Activated B cell treated with CpG ODN at 0.5 μM for 24 hours (primary cell): ENCODE measurements at regions of chr15 and their contacts with region 1.

Region 1: GRCh38 chr15:25850154-25851111 is 12.7 kb downstream of the ATP10A start:
- DNase-seq: peak; percentile 67
- ATAC-seq: peak; percentile 88
- H3K4me3 Mint-ChIP-seq: peak overlapping the region; percentile 84
- H3K27ac Mint-ChIP-seq: peak overlapping the region; percentile 93
- H3K4me1 Mint-ChIP-seq: peaks cover 66% of the 10 kb centered on the region
- H3K27me3 Mint-ChIP-seq: peaks cover 3% of the 10 kb centered on the region
- CTCF ChIP-seq: no peak

Region 2: GRCh38 chr15:25693321-25694237 is 156.9 kb before region 1 on chr15:
- CTCF ChIA-PET with region 1: no interaction called
- POLR2A ChIA-PET with region 1: no interaction called
- intact Hi-C with region 1: loop called (anchors 1 kb)
- DNase-seq: no peak
- ATAC-seq: no peak
- H3K4me3 Mint-ChIP-seq: no peak overlapping the region
- H3K27ac Mint-ChIP-seq: no peak overlapping the region
- H3K4me1 Mint-ChIP-seq: no peaks in the 10 kb centered on the region
- H3K27me3 Mint-ChIP-seq: no peaks in the 10 kb centered on the region
- CTCF ChIP-seq: no peak

Region 3: GRCh38 chr15:25775317-25775912 is 75.0 kb before region 1 on chr15:
- CTCF ChIA-PET with region 1: no interaction called
- POLR2A ChIA-PET with region 1: no interaction called
- intact Hi-C with region 1: loop called (anchors 2 kb)
- DNase-seq: no peak
- ATAC-seq: peak; percentile 94
- H3K4me3 Mint-ChIP-seq: no peak overlapping the region
- H3K27ac Mint-ChIP-seq: no peak overlapping the region
- H3K4me1 Mint-ChIP-seq: peaks cover 14% of the 10 kb centered on the region
- H3K27me3 Mint-ChIP-seq: peaks cover 7% of the 10 kb centered on the region
- CTCF ChIP-seq: no peak

Region 4: GRCh38 chr15:25811481-25811906 is 38.9 kb before region 1 on chr15:
- CTCF ChIA-PET with region 1: no interaction called
- POLR2A ChIA-PET with region 1: no interaction called
- intact Hi-C with region 1: loop called (anchors 5 kb)
- DNase-seq: no peak
- ATAC-seq: peak; percentile 54
- H3K4me3 Mint-ChIP-seq: no peak overlapping the region
- H3K27ac Mint-ChIP-seq: no peak overlapping the region
- H3K4me1 Mint-ChIP-seq: peaks cover 18% of the 10 kb centered on the region
- H3K27me3 Mint-ChIP-seq: peaks cover 21% of the 10 kb centered on the region
- CTCF ChIP-seq: no peak

Region 5: GRCh38 chr15:25838191-25838870 is 12.1 kb before region 1 on chr15:
- CTCF ChIA-PET with region 1: no interaction called
- POLR2A ChIA-PET with region 1: interaction called, 3 read pairs
- intact Hi-C with region 1: loop called (anchors 1 kb)
- DNase-seq: no peak
- ATAC-seq: peak; percentile 60
- H3K4me3 Mint-ChIP-seq: no peak overlapping the region
- H3K27ac Mint-ChIP-seq: no peak overlapping the region
- H3K4me1 Mint-ChIP-seq: peaks cover 10% of the 10 kb centered on the region
- H3K27me3 Mint-ChIP-seq: peaks cover 27% of the 10 kb centered on the region
- CTCF ChIP-seq: no peak

Region 6: GRCh38 chr15:25939122-25939521 is 88.7 kb after region 1 on chr15:
- CTCF ChIA-PET with region 1: no interaction called
- POLR2A ChIA-PET with region 1: interaction called, 4 read pairs
- intact Hi-C with region 1: loop called (anchors 1 kb)
- DNase-seq: peak; percentile 23
- ATAC-seq: peak; percentile 93
- H3K4me3 Mint-ChIP-seq: peak overlapping the region; percentile 32
- H3K27ac Mint-ChIP-seq: no peak overlapping the region
- H3K4me1 Mint-ChIP-seq: peaks cover 28% of the 10 kb centered on the region
- H3K27me3 Mint-ChIP-seq: no peaks in the 10 kb centered on the region
- CTCF ChIP-seq: no peak

Region 7: DNA sequence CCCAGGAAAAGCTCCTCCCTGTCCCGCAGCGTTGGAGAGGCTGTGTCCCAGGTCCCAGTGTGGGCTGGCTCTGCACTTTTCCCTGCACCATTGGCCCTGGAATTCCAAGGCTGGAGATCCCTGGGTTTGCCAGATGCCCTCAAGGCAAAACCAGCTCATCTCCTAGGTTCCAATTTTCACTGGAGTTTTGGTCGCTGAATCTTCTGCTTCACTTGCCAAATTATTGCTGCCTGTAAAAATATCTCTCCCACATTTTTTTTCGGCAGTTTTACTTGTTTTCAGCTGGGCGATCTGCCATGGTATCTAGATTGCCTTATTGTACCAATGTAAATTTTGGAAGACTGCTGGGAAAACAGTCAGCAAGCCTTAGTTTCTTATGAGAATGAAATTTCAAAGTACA is 163.5 kb after region 1 on chr15:
- CTCF ChIA-PET with region 1: no interaction called
- POLR2A ChIA-PET with region 1: no interaction called
- intact Hi-C with region 1: no loop called
- DNase-seq: no peak
- ATAC-seq: no peak
- H3K4me3 Mint-ChIP-seq: no peak overlapping the region
- H3K27ac Mint-ChIP-seq: no peak overlapping the region
- H3K4me1 Mint-ChIP-seq: peaks cover 2% of the 10 kb centered on the region
- H3K27me3 Mint-ChIP-seq: peaks cover 4% of the 10 kb centered on the region
- CTCF ChIP-seq: no peak